Panc1 (cell line): ENCODE measurements at regions of chr12 and their contacts with region 1.

Region 1: GRCh38 chr12:112140728-112141127 is 15.4 kb downstream of the TRAFD1 start:
- DNase-seq: no peak
- ATAC-seq: no peak
- H3K4me3 ChIP-seq: no peak overlapping the region
- H3K27ac ChIP-seq: no peak overlapping the region
- H3K4me1 ChIP-seq: no peaks in the 10 kb centered on the region
- H3K27me3 ChIP-seq: no peaks in the 10 kb centered on the region
- CTCF ChIP-seq: no peak

Region 2: DNA sequence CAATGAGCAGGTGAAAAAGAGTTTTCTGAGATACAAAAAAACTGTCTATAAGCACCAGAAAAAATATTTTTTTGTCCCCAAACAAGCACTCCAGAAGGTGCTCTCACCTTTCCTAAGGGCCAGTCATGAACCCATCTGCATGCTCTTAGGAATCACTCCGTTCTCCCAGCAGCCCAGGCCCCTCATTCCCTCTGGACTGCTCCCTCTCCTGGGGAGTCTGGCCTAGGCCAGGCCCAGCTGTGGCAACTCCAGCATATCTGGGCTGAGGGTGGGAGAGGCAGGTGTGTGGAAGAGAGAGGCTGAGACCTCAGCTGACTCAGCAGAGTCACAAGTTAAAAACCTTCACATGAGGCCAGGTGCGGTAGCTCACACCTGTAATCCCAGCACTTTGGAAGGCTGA is 39.2 kb after region 1 on chr12:
- CTCF ChIA-PET with region 1: no interaction called
- POLR2A ChIA-PET with region 1: no interaction called
- in situ Hi-C with region 1: no loop called
- intact Hi-C with region 1: no loop called
- DNase-seq: no peak
- ATAC-seq: no peak
- H3K4me3 ChIP-seq: no peak overlapping the region
- H3K27ac ChIP-seq: no peak overlapping the region
- H3K4me1 ChIP-seq: no peaks in the 10 kb centered on the region
- H3K27me3 ChIP-seq: no peaks in the 10 kb centered on the region
- CTCF ChIP-seq: no peak

Region 3: GRCh38 chr12:112382232-112382796 is 241.6 kb after region 1 on chr12 and contains the start of gene HECTD4:
- CTCF ChIA-PET with region 1: no interaction called
- POLR2A ChIA-PET with region 1: no interaction called
- in situ Hi-C with region 1: no loop called
- intact Hi-C with region 1: no loop called
- DNase-seq: no peak
- ATAC-seq: peak; percentile 98
- H3K4me3 ChIP-seq: peak within 1 kb of the TSS; percentile 78 to 83
- H3K27ac ChIP-seq: peak within 1 kb of the TSS; percentile 93
- H3K4me1 ChIP-seq: peaks cover 7% of the 10 kb centered on the region
- H3K27me3 ChIP-seq: no peaks in the 10 kb centered on the region
- CTCF ChIP-seq: no peak
- total RNA-seq, gene HECTD4: 51.3 TPM

Region 4: GRCh38 chr12:112841906-112842305 is 701.2 kb after region 1 on chr12:
- CTCF ChIA-PET with region 1: no interaction called
- POLR2A ChIA-PET with region 1: interaction called, 11 read pairs
- in situ Hi-C with region 1: no loop called
- intact Hi-C with region 1: no loop called
- DNase-seq: no peak
- ATAC-seq: no peak
- H3K4me3 ChIP-seq: no peak overlapping the region
- H3K27ac ChIP-seq: no peak overlapping the region
- H3K4me1 ChIP-seq: no peaks in the 10 kb centered on the region
- H3K27me3 ChIP-seq: no peaks in the 10 kb centered on the region
- CTCF ChIP-seq: no peak